Activated naive CD4-positive, alpha-beta T cell treated with anti-CD3 and anti-CD28 coated beads, Interleukin-2, amount 10 ng/mL, durations not matched to agents 7 days and 5 days (primary cell): ENCODE measurements at regions of chr18 and their contacts with region 1.

Region 1: GRCh38 chr18:21489119-21489750 is 111.3 kb downstream of the ESCO1 start:
- DNase-seq: peak; percentile 49
- H3K4me3 Mint-ChIP-seq: no peak overlapping the region
- H3K27ac Mint-ChIP-seq: no peak overlapping the region
- H3K4me1 Mint-ChIP-seq: no peaks in the 10 kb centered on the region
- H3K27me3 Mint-ChIP-seq: peaks cover 3% of the 10 kb centered on the region

Region 2: DNA sequence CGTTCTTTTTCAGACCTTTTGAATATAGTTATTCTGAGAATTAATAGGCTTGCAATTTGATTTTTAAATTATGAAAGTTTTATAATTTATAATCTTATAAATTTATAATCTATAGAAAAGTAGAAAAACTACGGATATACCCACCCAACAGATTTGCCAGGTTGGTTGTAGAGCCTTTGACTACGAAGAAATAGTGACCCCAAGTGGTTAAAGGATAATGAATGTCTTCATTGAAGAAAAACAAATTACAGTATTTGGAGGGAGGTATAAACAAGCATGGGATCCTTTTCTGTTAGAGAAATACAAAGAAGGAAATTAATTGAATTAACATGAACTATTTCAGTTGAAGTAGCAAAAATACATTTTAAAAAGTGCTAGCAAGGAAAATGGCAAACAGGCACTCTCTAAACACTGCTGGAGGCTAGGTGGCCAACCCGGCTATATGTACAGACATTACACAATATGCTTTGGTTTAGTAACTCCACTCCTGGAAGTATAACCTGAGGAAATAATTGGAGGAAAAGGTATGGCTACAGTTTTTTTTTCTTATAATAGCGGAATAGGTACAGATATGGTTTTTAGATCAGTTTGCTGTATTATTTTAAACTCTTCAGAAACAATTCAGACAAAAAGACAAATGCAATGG is 362.2 kb after region 1 on chr18:
- CTCF ChIA-PET with region 1: interaction called, 14 read pairs
- DNase-seq: no peak
- H3K4me3 Mint-ChIP-seq: no peak overlapping the region
- H3K27ac Mint-ChIP-seq: no peak overlapping the region
- H3K4me1 Mint-ChIP-seq: peaks cover 15% of the 10 kb centered on the region
- H3K27me3 Mint-ChIP-seq: no peaks in the 10 kb centered on the region

Region 3: DNA sequence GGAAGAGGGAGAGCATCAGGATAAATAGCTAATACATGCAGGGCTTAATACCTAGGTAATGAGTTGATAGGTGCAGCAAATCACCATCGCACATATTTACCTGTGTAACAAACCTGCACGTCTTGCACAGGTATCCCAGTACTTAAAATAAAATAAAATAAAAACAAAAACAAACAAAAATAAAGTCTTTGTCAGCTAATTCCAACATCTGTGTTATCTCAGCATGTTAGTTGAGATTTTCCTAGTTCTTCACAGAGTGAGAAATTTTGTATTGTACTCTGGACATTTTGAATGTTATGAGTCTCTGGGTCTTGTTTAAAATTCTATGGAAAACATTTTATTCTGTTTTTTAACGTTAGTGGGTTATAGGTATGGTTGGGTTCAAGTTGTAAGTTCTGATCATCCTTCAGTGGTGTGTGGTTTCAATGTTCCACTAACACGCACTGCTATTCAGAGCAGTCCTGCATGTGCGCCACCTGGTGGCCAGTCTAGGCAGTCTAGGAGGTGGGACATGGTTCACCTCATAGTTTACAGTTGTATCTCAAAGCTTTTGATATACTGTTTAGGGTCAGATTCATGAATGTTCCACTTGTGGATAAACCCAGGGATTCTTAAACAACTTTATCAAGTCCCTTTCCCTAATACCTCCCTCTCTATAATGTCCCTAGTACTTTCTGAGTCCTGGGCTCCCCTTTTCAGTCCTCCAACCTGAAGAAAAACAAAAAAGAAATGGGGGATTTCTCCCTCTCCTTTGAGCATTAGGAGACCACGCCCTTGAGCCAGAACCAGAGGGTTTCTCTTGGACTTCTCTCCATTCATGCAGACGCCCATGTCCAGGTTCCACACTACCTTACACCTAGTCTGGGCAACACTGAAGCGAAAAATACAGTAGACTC is 466.8 kb after region 1 on chr18:
- CTCF ChIA-PET with region 1: interaction called, 14 read pairs
- DNase-seq: peak; percentile 85
- H3K4me3 Mint-ChIP-seq: no peak overlapping the region
- H3K27ac Mint-ChIP-seq: no peak overlapping the region
- H3K4me1 Mint-ChIP-seq: no peaks in the 10 kb centered on the region
- H3K27me3 Mint-ChIP-seq: peaks cover 9% of the 10 kb centered on the region